ENCODE measurements at regions of chr12 and their contacts with region 1.

Region 1: GRCh38 chr12:69254046-69254445 is 14.7 kb downstream of the CPSF6 start:
- DNase-seq: no peak
- ATAC-seq: peak in 1 of 2 donors; percentile 78
- H3K4me3 ChIP-seq: no peak overlapping the region
- H3K27ac ChIP-seq: no peak overlapping the region
- H3K4me1 ChIP-seq: peaks cover 7 to 9% of the 10 kb centered on the region in 2 donors
- H3K27me3 ChIP-seq: no peaks in the 10 kb centered on the region
- CTCF ChIP-seq: peak in 4 of 5 experiments; percentile 50 to 66 (median 58)
- POLR2A ChIP-seq: no peak

Region 2: GRCh38 chr12:69149270-69149669 is 104.8 kb before region 1 on chr12:
- in situ Hi-C with region 1: loop called (anchors 5 to 10 kb)
- intact Hi-C with region 1: loop called (anchors 1 kb)
- DNase-seq: no peak
- ATAC-seq: no peak
- H3K4me3 ChIP-seq: no peak overlapping the region
- H3K27ac ChIP-seq: no peak overlapping the region
- H3K4me1 ChIP-seq: peaks cover 4 to 9% of the 10 kb centered on the region in 2 donors
- H3K27me3 ChIP-seq: no peaks in the 10 kb centered on the region
- CTCF ChIP-seq: no peak
- POLR2A ChIP-seq: no peak

Region 3: DNA sequence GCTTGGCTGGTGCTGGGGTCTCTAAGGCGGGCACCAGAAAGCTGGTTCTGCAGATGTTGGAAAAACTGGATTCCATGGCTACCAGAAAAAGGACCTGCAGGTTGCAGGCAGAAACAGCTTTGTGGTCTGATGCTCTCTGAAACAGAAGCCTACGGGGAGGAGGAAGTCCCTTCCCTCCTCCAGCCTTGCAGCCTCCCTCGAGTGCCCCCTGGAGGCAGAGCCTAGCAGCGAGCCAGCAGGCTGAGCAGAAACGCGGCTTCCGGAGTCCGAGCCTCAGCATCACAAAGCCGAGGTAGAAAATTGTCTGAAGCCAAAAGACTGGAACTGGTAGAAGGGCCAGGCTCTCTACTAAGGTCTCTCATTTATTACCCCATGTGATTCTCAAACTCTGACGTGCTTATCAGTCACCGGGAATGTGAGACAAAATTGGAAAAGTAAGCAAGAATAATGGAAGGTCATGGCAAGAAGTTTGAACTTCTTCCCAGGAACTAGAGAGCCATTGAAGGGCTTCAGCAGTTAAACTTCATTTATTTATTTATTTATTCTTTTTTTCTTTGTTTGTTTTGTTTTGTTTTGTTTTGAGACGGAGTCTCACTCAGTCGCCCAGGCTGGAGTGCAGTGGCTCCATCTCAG is 96.9 kb before region 1 on chr12:
- in situ Hi-C with region 1: loop called in 3 of 4 experiments (anchors 5 to 10 kb)
- intact Hi-C with region 1: loop called (anchors 1 kb)
- DNase-seq: peak; percentile 34 to 45
- ATAC-seq: peak in 1 of 2 donors; percentile 77
- H3K4me3 ChIP-seq: no peak overlapping the region
- H3K27ac ChIP-seq: no peak overlapping the region
- H3K4me1 ChIP-seq: no peaks in the 10 kb centered on the region
- H3K27me3 ChIP-seq: no peaks in the 10 kb centered on the region
- CTCF ChIP-seq: peak in 4 of 5 experiments; percentile 46 to 87 (median 63)
- POLR2A ChIP-seq: no peak

Region 4: GRCh38 chr12:69464428-69464827 is 210.4 kb after region 1 on chr12:
- in situ Hi-C with region 1: no loop called
- intact Hi-C with region 1: no loop called
- DNase-seq: no peak
- ATAC-seq: no peak
- H3K4me3 ChIP-seq: no peak overlapping the region
- H3K27ac ChIP-seq: no peak overlapping the region
- H3K4me1 ChIP-seq: no peaks in the 10 kb centered on the region
- H3K27me3 ChIP-seq: no peaks in the 10 kb centered on the region
- CTCF ChIP-seq: no peak
- POLR2A ChIP-seq: no peak

Region 5: DNA sequence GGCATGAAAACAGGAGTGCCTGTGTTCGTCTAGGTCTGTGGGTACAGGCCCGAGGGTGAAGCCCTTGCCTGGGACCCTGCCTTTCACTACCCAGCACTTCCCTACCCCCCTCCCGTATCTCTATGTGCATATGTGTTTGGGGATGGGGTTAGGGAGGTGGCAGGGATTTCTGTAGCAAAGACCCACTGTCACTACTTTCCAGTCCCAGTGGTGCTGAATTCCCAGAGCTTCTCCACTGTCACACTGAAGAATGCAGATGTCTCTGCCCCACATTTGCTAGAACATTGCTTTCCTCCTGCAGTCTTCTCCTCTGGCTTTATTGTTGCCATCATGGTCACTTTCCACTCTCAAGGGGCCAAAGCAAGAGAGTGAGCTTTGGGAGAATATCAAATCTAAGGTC is 774.9 kb after region 1 on chr12:
- in situ Hi-C with region 1: no loop called
- intact Hi-C with region 1: no loop called
- DNase-seq: no peak
- ATAC-seq: no peak
- H3K4me3 ChIP-seq: no peak overlapping the region
- H3K27ac ChIP-seq: no peak overlapping the region
- H3K4me1 ChIP-seq: no peaks in the 10 kb centered on the region
- H3K27me3 ChIP-seq: no peaks in the 10 kb centered on the region
- CTCF ChIP-seq: no peak
- POLR2A ChIP-seq: no peak

Measured in gastrocnemius medialis (tissue), 4 donors.